Activated CD8-positive, alpha-beta memory T cell treated with anti-CD3 and anti-CD28 coated beads, Interleukin-2, amount 10 ng/mL, durations not matched to agents 7 days and 5 days (primary cell): ENCODE measurements at regions of chr14 and their contacts with region 1.

Region 1: GRCh38 chr14:73568381-73568781 is 632 bp upstream of the ACOT2 start:
- DNase-seq: no peak
- ATAC-seq: no peak
- H3K4me3 Mint-ChIP-seq: peak overlapping the region; percentile 83
- H3K27ac Mint-ChIP-seq: peak overlapping the region; percentile 97
- H3K4me1 Mint-ChIP-seq: peaks cover 38% of the 10 kb centered on the region
- H3K27me3 Mint-ChIP-seq: no peaks in the 10 kb centered on the region

Region 2: DNA sequence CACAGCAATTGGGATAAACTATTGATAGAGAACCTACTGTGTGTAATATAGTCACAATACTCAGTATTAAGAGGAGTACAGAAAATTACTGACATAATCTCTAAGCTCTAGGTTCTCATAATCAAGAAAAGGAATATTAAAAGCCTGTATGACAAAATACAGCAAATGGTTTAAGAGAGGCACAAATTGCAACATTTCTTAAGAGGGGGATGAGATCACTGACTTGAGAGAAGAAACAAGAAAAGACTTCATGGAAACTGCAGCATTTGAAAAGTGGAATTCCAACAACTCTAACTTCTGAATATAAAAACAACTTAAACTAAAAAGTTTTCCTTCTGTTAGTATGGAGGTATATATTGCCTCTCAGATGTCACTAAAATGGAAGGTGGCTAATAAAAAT is 199.8 kb before region 1 on chr14:
- CTCF ChIA-PET with region 1: no interaction called
- DNase-seq: no peak
- ATAC-seq: no peak
- H3K4me3 Mint-ChIP-seq: no peak overlapping the region
- H3K27ac Mint-ChIP-seq: no peak overlapping the region
- H3K4me1 Mint-ChIP-seq: peaks cover 4% of the 10 kb centered on the region
- H3K27me3 Mint-ChIP-seq: no peaks in the 10 kb centered on the region

Region 3: DNA sequence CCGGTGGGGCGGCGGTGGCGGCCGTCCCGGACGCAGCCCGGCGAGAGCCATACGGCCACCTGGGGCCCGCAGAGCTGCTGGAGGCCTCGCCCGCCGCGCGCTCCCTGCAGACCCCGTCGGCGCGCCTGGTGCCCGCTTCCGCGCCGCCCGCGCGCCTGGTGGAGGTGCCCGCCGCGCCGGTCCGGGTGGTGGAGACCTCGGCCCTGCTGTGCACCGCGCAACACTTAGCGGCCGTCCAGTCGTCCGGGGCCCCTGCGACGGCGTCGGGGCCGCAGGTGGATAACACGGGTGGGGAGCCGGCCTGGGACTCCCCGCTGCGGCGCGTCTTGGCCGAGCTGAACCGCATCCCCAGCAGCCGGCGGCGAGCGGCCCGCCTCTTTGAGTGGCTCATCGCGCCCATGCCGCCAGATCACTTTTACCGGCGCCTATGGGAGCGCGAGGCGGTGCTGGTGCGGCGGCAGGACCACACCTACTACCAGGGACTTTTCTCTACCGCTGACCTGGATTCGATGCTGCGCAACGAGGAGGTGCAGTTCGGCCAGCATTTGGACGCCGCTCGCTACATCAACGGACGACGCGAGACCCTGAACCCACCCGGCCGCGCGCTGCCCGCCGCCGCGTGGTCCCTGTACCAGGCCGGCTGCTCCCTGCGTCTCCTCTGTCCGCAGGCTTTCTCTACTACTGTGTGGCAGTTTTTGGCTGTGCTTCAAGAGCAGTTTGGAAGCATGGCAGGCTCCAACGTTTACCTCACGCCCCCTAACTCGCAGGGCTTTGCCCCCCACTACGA is 76.9 kb before region 1 on chr14:
- CTCF ChIA-PET with region 1: interaction called, 16 read pairs
- DNase-seq: peak; percentile 80
- ATAC-seq: peak; percentile 73
- H3K4me3 Mint-ChIP-seq: peak overlapping the region; percentile 78
- H3K27ac Mint-ChIP-seq: peak overlapping the region; percentile 74
- H3K4me1 Mint-ChIP-seq: peaks cover 42% of the 10 kb centered on the region
- H3K27me3 Mint-ChIP-seq: peaks cover 10% of the 10 kb centered on the region

Region 4: DNA sequence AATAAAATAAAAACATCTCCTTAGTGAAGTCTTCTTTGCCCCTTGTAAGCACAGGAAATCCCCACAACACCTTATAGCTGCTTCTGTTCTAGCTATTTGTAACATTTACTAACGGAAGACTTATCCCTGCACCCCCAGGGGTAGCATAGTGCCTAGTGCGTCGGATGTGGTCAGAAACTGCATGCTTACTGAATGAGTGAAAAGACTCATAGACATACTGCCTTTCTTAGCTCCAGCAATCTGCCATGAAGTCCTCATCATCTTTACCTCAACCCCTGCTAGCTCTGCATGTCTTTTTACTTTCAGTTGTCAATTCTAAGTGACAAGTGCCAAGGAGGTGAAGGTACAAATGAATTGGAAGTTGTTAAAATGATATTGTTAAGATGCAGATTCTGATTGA is 64.7 kb before region 1 on chr14:
- CTCF ChIA-PET with region 1: interaction called, 55 read pairs
- DNase-seq: peak; percentile 60
- ATAC-seq: peak; percentile 90
- H3K4me3 Mint-ChIP-seq: no peak overlapping the region
- H3K27ac Mint-ChIP-seq: peak overlapping the region; percentile 72
- H3K4me1 Mint-ChIP-seq: peaks cover 7% of the 10 kb centered on the region
- H3K27me3 Mint-ChIP-seq: no peaks in the 10 kb centered on the region

Region 5: GRCh38 chr14:73553845-73554244 is 14.5 kb before region 1 on chr14:
- CTCF ChIA-PET with region 1: no interaction called
- DNase-seq: no peak
- ATAC-seq: no peak
- H3K4me3 Mint-ChIP-seq: no peak overlapping the region
- H3K27ac Mint-ChIP-seq: no peak overlapping the region
- H3K4me1 Mint-ChIP-seq: no peaks in the 10 kb centered on the region
- H3K27me3 Mint-ChIP-seq: peaks cover 2% of the 10 kb centered on the region

Region 6: DNA sequence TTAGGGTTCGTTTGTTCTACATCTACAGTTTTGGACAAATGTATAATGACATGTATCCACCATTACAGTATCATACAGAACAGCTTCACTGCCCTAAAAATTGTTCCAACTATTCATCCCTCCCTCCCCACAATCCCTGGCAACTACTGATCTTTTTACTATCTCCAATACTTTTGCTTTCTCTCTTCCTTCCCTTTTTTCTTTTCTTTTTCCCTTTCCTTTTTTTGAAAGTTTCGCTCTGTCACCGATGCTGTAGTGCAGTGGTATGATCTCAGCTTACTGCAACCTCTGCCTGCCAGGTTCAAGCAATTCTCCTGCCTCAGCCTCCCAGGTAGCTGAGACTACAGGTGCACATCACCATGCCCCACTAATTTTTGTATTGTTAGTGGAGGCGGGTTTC is 20.7 kb after region 1 on chr14:
- CTCF ChIA-PET with region 1: interaction called, 14 read pairs
- DNase-seq: no peak
- ATAC-seq: no peak
- H3K4me3 Mint-ChIP-seq: no peak overlapping the region
- H3K27ac Mint-ChIP-seq: no peak overlapping the region
- H3K4me1 Mint-ChIP-seq: peaks cover 15% of the 10 kb centered on the region
- H3K27me3 Mint-ChIP-seq: peaks cover 3% of the 10 kb centered on the region

Region 7: GRCh38 chr14:73613046-73613383 is 44.6 kb after region 1 on chr14:
- CTCF ChIA-PET with region 1: interaction called, 11 read pairs
- DNase-seq: no peak
- ATAC-seq: no peak
- H3K4me3 Mint-ChIP-seq: peak overlapping the region; percentile 79
- H3K27ac Mint-ChIP-seq: peak overlapping the region; percentile 78
- H3K4me1 Mint-ChIP-seq: peaks cover 16% of the 10 kb centered on the region
- H3K27me3 Mint-ChIP-seq: peaks cover 14% of the 10 kb centered on the region

Region 8: GRCh38 chr14:73633116-73634010 is 65.0 kb after region 1 on chr14:
- CTCF ChIA-PET with region 1: interaction called, 13 read pairs
- DNase-seq: peak; percentile 70
- ATAC-seq: peak; percentile 83
- H3K4me3 Mint-ChIP-seq: peak overlapping the region; percentile 65
- H3K27ac Mint-ChIP-seq: no peak overlapping the region
- H3K4me1 Mint-ChIP-seq: peaks cover 5% of the 10 kb centered on the region
- H3K27me3 Mint-ChIP-seq: peaks cover 16% of the 10 kb centered on the region